Activated T-helper 1 cell treated with anti-CD3 and anti-CD28 coated beads, Interleukin-12 subunit alpha, Interleukin-12 subunit beta, Interleukin-2, Interleukin-4 antibody, amounts not matched to agents 30 ng/mL and 10 ng/mL and 1 ng/mL, durations not matched to agents 14 hours and 24 hours and 36 hours (primary cell): ENCODE measurements at regions of chr6 and their contacts with region 1.

Region 1: GRCh38 chr6:2634139-2634964 is 116.4 kb downstream of the MYLK4 start:
- DNase-seq: peak; percentile 70
- H3K4me3 Mint-ChIP-seq: peak overlapping the region; percentile 61
- H3K27ac Mint-ChIP-seq: no peak overlapping the region
- H3K4me1 Mint-ChIP-seq: no peaks in the 10 kb centered on the region
- H3K27me3 Mint-ChIP-seq: peaks cover 29% of the 10 kb centered on the region

Region 2: GRCh38 chr6:1596088-1596852 is 1038.1 kb before region 1 on chr6:
- intact Hi-C with region 1: loop called (anchors 1 kb)
- DNase-seq: peak; percentile 50
- H3K4me3 Mint-ChIP-seq: no peak overlapping the region
- H3K27ac Mint-ChIP-seq: no peak overlapping the region
- H3K4me1 Mint-ChIP-seq: peaks cover 4% of the 10 kb centered on the region
- H3K27me3 Mint-ChIP-seq: peaks cover 55% of the 10 kb centered on the region

Region 3: DNA sequence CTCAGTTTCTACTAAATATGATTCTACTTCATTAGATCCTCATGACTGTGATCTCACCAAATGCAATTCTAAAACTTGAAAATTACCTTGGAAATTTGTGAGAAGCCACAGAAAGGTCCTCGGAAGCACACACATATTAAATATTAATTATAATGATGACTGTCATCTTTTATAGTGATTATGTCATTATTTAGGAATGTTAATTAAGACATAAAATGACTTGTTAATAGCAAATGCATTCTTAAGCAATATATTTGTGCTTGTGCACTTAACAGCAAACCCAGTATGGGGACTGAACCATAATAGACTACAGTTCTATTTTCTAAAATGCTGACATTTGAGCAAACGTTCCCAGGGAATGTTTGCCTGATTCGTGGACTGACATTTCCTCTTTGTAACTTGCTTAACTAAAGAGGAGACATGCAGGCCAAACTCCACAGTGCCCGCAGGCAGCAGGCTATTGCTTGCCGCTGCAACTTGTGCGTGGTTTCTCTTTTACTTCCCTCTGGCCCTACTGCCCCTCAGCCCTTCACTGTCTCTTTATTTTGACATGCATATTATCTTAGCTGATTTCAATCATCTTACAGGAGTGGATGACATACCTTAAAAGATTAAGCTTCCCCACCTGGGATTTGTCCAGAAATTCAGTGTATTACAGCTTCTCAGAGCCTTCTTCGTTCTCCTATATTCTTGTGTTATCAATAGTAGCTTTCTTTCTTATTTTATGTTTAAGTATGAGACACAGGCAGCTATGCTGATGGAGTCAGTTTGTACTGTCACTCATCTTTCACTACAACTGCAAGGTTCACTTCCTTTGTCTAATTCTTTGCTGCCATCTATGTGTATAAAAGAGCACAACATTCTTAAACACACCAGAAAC is 530.5 kb before region 1 on chr6:
- intact Hi-C with region 1: loop called (anchors 5 kb)
- DNase-seq: no peak
- H3K4me3 Mint-ChIP-seq: no peak overlapping the region
- H3K27ac Mint-ChIP-seq: no peak overlapping the region
- H3K4me1 Mint-ChIP-seq: peaks cover 6% of the 10 kb centered on the region
- H3K27me3 Mint-ChIP-seq: peaks cover 2% of the 10 kb centered on the region

Region 4: DNA sequence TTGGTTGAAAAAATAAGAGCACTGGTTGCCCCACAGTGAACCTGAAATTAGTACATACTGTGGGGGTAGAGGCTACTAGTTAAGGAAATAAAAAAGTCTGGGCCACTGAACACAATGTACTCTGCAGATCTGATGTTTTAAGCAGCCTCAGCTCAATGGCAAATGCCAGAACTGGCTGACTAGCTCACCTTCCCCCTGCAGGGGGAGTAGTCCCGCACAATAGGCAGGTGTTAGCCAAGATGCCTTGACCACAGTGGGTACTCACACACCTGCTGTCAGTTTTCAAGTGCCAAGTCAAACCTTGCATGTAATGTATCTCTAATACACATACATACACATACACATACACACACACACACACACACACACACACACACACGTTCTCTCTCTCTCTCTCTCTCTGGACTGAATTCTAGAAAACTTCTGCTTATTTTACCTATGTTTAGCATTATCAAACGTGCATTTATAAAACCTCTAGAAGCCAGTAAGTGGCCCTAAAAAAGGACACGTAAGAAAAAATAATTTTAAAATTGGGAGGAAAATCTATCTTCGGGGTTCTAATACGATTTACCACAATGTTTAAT is 425.0 kb before region 1 on chr6:
- intact Hi-C with region 1: loop called (anchors 1 kb)
- DNase-seq: peak; percentile 11
- H3K4me3 Mint-ChIP-seq: no peak overlapping the region
- H3K27ac Mint-ChIP-seq: no peak overlapping the region
- H3K4me1 Mint-ChIP-seq: no peaks in the 10 kb centered on the region
- H3K27me3 Mint-ChIP-seq: peaks cover 2% of the 10 kb centered on the region

Region 5: DNA sequence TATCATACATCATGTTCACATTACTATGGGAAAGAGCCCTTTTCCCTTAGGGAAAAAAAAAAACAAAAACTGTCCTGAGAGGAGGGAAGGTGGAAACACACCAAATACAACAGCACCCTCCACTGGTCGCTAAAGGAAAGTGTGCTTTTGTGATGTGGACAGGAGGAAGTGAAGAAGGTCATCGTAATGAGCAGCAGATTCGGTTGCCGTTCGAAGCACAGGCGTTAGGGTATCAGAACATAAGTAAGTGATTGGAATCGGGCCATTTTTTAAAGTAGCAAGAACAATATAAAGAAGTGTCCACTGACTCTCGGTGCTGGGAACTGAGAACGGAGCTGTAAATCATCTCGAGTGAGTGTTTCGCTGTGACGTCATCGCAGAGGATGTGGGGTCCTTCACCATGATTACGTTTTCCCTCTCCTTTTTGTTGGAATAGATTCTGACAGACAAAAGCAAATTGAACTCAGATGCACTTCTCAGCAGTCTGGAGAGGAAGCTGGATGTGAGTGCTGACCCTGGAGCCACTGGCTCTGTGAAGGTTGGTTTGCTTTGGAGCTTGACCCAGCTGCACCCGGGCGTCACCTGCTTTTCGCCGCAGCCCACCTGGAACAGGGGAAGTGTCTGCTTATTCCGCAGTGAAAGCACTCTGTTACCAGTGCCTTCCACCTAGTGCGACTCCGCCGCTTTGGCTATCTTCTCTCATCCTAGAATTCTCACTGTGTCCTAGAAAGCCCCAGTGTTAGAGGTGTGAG is 185.4 kb before region 1 on chr6:
- intact Hi-C with region 1: loop called (anchors 1 kb)
- DNase-seq: no peak
- H3K4me3 Mint-ChIP-seq: no peak overlapping the region
- H3K27ac Mint-ChIP-seq: no peak overlapping the region
- H3K4me1 Mint-ChIP-seq: peaks cover 8% of the 10 kb centered on the region
- H3K27me3 Mint-ChIP-seq: peaks cover 11% of the 10 kb centered on the region

Region 6: GRCh38 chr6:2563635-2564034 is 70.7 kb before region 1 on chr6:
- intact Hi-C with region 1: loop called (anchors 5 kb)
- DNase-seq: peak; percentile 22
- H3K4me3 Mint-ChIP-seq: peak overlapping the region; percentile 13
- H3K27ac Mint-ChIP-seq: no peak overlapping the region
- H3K4me1 Mint-ChIP-seq: peaks cover 14% of the 10 kb centered on the region
- H3K27me3 Mint-ChIP-seq: peaks cover 56% of the 10 kb centered on the region